HEK293T (cell line): ENCODE measurements at regions of chr7 and their contacts with region 1.

Region 1: GRCh38 chr7:157352516-157352915 is 15.7 kb downstream of the DNAJB6 start:
- DNase-seq: no peak

Region 2: GRCh38 chr7:157339777-157340677 is 12.5 kb before region 1 on chr7:
- CTCF ChIA-PET with region 1: interaction called, 14 read pairs
- POLR2A ChIA-PET with region 1: interaction called, 4 read pairs
- DNase-seq: peak; percentile 77